Left colon (tissue), 2 donors: ENCODE measurements at regions of chr6 and their contacts with region 1.

Region 1: GRCh38 chr6:32118782-32119628 is 9.0 kb downstream of the ATF6B start:
- DNase-seq: peak; percentile 82 to 88
- ATAC-seq: peak; percentile 94

Region 2: DNA sequence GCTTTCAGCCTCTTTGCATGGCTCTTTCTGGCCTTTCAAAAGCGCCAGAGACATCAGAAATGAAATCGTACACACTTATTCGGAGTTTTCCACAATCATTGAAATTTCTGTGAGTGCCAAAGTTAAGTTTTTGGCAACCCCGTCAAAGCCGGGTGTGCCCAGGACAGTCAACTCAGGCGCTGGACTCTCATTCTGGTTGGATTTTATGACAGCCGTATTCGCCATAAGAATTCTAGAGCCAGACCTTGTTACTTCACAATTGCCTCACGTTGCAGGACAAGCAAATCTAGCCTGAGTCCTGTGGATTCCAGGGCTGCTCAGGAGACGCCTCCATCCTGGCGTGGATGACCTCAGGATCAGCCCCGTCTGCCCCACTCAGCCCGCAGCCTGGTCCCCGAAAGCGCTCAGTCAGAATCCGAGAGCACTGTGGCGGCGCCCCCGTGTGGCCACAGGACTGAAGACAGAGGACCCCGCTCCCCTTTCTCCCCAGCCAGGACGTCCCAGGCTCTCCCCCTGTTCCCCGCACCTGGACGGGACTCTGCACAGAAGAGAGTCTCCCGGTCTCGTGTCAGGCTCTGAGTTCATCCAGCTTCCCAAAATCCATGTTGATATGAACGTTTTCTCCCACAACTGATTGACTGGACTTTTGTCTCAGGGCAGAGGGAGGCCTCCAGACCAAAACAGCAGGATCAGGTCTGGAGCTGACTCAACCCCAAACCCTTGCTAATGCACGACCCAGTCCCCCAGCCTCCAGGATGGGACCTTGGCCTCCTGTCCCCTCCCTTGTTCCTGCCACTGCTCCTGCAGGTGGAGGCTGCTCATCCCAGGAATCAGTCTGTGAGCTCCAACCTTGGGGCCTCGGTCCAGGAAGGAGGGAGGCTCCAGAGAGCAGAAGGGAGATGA is 677.4 kb before region 1 on chr6:
- intact Hi-C with region 1: no loop called
- DNase-seq: peak; percentile 67 to 90
- ATAC-seq: peak; percentile 92

Region 3: GRCh38 chr6:32195652-32195901 is 76.6 kb after region 1 on chr6:
- intact Hi-C with region 1: loop called in 1 of 2 experiments (anchors 10 kb)
- DNase-seq: peak; percentile 100
- ATAC-seq: peak; percentile 84

Region 4: GRCh38 chr6:32244946-32245398 is 126.0 kb after region 1 on chr6:
- intact Hi-C with region 1: loop called in 1 of 2 experiments (anchors 5 kb)
- DNase-seq: peak; percentile 63 to 84
- ATAC-seq: peak; percentile 68